ENCODE measurements at regions of chr12 and their contacts with region 1.

Region 1: GRCh38 chr12:62799126-62799736 is 135.7 kb downstream of the PPM1H start:
- DNase-seq: peak; percentile 60 to 83
- ATAC-seq: peak; percentile 76 to 92
- H3K4me3 ChIP-seq: no peak overlapping the region
- H3K27ac ChIP-seq: peak overlapping the region; percentile 40 to 70
- H3K4me1 ChIP-seq: peaks cover 26% of the 10 kb centered on the region
- CTCF ChIP-seq: peak; percentile 94
- EP300 ChIP-seq: no peak
- POLR2A ChIP-seq: no peak
- RAD21 ChIP-seq: peak; percentile 94 to 98

Region 2: DNA sequence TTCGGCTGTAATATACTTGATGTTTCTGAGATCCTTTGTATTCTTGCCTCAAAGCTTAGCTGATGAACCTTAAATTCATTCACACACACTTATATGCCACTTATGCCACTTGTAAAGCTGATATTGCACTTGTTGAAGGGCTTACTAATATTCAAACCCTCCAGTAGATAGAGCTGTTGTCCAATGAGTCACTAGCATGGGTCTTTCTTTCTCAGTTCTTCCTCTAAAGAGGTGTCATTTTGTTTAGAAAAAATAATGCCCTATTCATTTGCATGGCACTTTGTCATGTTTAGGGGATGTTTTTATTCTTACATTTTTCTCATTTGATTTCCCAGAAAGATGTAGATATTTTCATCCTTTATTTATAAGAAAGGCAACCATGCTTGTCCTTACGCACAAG is 276.2 kb before region 1 on chr12:
- CTCF ChIA-PET with region 1: interaction called, 14 read pairs
- POLR2A ChIA-PET with region 1: no interaction called
- DNase-seq: peak in 1 of 2 experiments; percentile 48
- ATAC-seq: peak; percentile 62 to 66; a peak in 5 of 6 replicates
- H3K4me3 ChIP-seq: no peak overlapping the region
- H3K27ac ChIP-seq: no peak overlapping the region
- H3K4me1 ChIP-seq: peaks cover 45% of the 10 kb centered on the region
- CTCF ChIP-seq: peak; percentile 47
- EP300 ChIP-seq: no peak
- POLR2A ChIP-seq: no peak
- RAD21 ChIP-seq: peak; percentile 52 to 63

Region 3: DNA sequence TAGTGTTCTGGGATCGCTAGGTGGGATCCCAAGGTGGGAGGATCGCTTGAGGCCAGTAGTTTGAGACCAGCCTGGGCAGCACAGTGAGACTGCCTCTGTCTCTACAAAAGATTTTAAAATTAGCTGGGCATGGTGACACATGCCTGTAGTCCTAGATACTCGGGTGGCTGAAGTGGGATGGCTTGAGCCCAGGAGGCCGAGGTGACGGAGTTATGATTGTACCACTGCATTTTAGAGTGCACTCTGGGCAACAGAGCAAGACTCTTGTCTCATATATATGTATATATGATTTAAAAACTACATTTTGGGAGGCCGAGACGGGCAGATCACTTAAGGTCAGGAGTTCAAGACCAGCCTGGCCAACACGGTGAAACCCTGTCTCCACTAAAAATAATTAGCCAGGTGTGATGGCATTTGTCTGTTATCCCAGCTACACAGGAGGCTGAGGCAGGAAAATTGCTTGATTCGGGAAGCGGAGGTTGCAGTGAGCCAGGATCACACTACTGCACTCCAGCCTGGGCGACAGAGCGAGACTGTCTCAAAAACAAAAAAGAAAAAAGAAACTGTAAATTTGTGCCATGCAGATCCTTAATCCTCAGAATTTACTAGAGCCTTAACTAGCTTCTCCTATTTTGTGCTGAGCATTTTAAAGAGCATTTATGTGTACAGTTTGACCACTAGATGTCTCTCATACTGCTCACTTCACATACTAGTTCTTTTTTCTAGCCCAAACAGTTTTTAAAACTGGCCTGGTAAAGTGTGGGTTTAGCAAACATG is 217.8 kb before region 1 on chr12:
- CTCF ChIA-PET with region 1: interaction called, 131 read pairs
- POLR2A ChIA-PET with region 1: interaction called, 5 read pairs
- DNase-seq: peak; percentile 40 to 74
- ATAC-seq: peak; percentile 85 to 94
- H3K4me3 ChIP-seq: no peak overlapping the region
- H3K27ac ChIP-seq: peak overlapping the region; percentile 20 to 77
- H3K4me1 ChIP-seq: peaks cover 27% of the 10 kb centered on the region
- CTCF ChIP-seq: peak; percentile 83
- EP300 ChIP-seq: no peak
- POLR2A ChIP-seq: no peak
- RAD21 ChIP-seq: peak; percentile 88 to 90

Region 4: GRCh38 chr12:62588916-62589315 is 210.3 kb before region 1 on chr12:
- CTCF ChIA-PET with region 1: interaction called, 131 read pairs
- POLR2A ChIA-PET with region 1: no interaction called
- DNase-seq: peak in 1 of 2 experiments; percentile 34
- ATAC-seq: peak; percentile 39 to 85; a peak in 3 of 6 replicates
- H3K4me3 ChIP-seq: no peak overlapping the region
- H3K27ac ChIP-seq: peak overlapping the region; percentile 34 to 71; a peak in 5 of 6 replicates
- H3K4me1 ChIP-seq: peaks cover 18% of the 10 kb centered on the region
- CTCF ChIP-seq: no peak
- EP300 ChIP-seq: no peak
- POLR2A ChIP-seq: no peak
- RAD21 ChIP-seq: no peak

Region 5: GRCh38 chr12:62882696-62883095 is 83.5 kb after region 1 on chr12:
- CTCF ChIA-PET with region 1: no interaction called
- POLR2A ChIA-PET with region 1: no interaction called
- DNase-seq: no peak
- ATAC-seq: no peak
- H3K4me3 ChIP-seq: no peak overlapping the region
- H3K27ac ChIP-seq: no peak overlapping the region
- H3K4me1 ChIP-seq: no peaks in the 10 kb centered on the region
- CTCF ChIP-seq: no peak
- EP300 ChIP-seq: no peak
- POLR2A ChIP-seq: no peak
- RAD21 ChIP-seq: no peak

Region 6: GRCh38 chr12:62900686-62901272 is 101.5 kb after region 1 on chr12:
- CTCF ChIA-PET with region 1: no interaction called
- POLR2A ChIA-PET with region 1: no interaction called
- DNase-seq: no peak
- ATAC-seq: no peak
- H3K4me3 ChIP-seq: no peak overlapping the region
- H3K27ac ChIP-seq: no peak overlapping the region
- H3K4me1 ChIP-seq: no peaks in the 10 kb centered on the region
- CTCF ChIP-seq: no peak
- EP300 ChIP-seq: no peak
- POLR2A ChIP-seq: no peak
- RAD21 ChIP-seq: no peak

Region 7: DNA sequence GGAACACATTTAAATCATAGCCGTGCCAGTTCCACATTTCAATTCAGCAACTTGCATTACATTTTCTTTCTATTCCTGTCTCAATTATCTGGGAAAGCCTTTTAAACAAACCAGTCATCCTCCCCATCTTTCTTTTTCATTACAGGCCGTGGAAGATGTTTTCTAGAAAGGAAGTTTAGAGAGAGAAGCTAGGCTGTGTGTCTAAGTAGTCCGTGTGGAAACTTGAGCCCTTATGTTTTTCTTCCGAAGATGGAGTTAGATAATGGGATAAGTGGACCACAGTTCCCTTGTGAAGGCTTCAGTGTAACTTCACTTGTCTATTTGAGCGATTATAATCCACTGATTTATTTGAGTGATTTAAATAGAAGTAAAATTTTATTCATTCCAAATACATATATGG is 148.1 kb after region 1 on chr12:
- CTCF ChIA-PET with region 1: no interaction called
- POLR2A ChIA-PET with region 1: no interaction called
- DNase-seq: no peak
- ATAC-seq: no peak
- H3K4me3 ChIP-seq: no peak overlapping the region
- H3K27ac ChIP-seq: no peak overlapping the region
- H3K4me1 ChIP-seq: no peaks in the 10 kb centered on the region
- CTCF ChIP-seq: no peak
- EP300 ChIP-seq: no peak
- POLR2A ChIP-seq: no peak
- RAD21 ChIP-seq: no peak

Region 8: GRCh38 chr12:63068857-63069442 is 269.7 kb after region 1 on chr12:
- CTCF ChIA-PET with region 1: interaction called, 43 read pairs
- POLR2A ChIA-PET with region 1: interaction called, 3 read pairs
- DNase-seq: peak; percentile 14 to 71
- ATAC-seq: peak; percentile 63 to 83; a peak in 3 of 6 replicates
- H3K4me3 ChIP-seq: no peak overlapping the region
- H3K27ac ChIP-seq: no peak overlapping the region
- H3K4me1 ChIP-seq: no peaks in the 10 kb centered on the region
- CTCF ChIP-seq: peak; percentile 84
- EP300 ChIP-seq: no peak
- POLR2A ChIP-seq: no peak
- RAD21 ChIP-seq: peak; percentile 84 to 86